Activated CD4-positive, alpha-beta T cell treated with anti-CD3 and anti-CD28 coated beads, Interleukin-2, amount 10 ng/mL, durations not matched to agents 7 days and 5 days (primary cell): ENCODE measurements at regions of chr1 and their contacts with region 1.

Region 1: DNA sequence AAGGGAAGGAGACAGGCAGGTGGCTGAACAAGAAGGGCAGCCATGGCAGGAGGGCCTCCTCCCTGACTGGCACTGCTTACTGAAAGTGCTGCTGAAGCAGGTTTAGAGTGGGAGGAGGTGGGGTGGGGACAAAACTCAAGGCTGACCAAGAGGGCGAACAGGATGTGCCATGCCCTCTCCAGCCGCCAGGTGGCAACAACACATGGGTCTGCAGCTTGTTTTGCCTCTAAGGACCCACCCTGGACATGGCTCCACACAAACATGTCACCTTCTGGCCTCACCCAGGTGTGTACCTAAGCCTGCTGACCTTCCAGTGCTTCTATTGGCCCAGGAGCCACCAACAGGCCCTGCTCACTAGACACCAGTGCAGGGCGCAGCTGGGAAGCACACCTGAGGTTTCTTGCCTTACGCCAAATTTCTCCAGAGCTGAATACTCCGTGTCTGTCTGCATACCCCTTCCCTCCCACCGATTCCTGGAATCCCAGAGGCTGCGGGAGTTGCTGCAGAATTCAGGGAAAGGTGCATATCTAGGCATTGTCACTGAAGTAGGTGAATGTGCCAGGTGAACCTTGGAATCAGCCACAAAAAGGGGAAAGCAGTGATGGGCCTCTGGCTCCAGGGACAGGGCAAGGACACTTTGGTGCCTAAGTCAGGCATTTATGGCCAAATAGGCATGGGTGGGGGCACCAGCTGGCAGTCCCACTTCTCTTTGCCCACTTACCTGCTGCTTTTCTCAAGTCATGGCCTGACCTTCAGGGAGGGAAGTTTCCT is 5.3 kb downstream of the PSRC1 start:
- DNase-seq: peak; percentile 66
- H3K4me3 Mint-ChIP-seq: no peak overlapping the region
- H3K27ac Mint-ChIP-seq: no peak overlapping the region
- H3K4me1 Mint-ChIP-seq: peaks cover 38% of the 10 kb centered on the region
- H3K27me3 Mint-ChIP-seq: no peaks in the 10 kb centered on the region

Region 2: DNA sequence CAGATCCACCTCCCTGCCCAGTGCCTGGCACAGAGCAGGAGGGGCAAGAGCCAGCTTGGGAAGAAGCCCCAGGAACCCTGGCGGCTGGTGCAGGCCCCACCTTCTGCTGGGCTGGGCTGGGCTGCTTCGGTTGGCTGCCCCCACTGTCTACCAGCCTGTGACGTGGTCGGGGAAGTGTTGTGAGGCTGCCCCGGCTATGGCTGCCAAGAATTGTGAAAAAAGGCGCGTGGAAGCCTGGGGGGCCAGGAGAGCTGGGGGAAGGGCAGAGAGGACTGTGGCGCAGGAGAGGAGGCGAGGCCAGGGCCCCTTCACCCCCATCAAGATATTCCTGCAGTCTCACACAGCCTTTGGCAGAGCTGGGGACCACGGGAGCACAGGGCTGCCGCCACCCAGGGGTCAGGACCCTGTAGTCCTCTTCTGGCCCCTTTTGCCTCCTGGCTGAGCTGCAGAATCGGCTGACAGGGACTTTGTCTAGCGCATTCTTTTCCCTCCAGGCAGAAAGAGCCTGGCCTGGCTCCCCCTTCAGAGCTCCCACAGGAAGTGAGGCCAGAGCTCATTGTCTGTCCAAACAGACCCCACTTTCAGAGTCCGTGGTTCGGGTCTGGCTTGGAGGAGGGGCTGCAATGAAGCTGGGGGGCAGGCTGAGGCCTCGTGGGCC is 24.0 kb before region 1 on chr1:
- CTCF ChIA-PET with region 1: interaction called, 10 read pairs
- POLR2A ChIA-PET with region 1: no interaction called
- DNase-seq: no peak
- H3K4me3 Mint-ChIP-seq: no peak overlapping the region
- H3K27ac Mint-ChIP-seq: no peak overlapping the region
- H3K4me1 Mint-ChIP-seq: peaks cover 6% of the 10 kb centered on the region
- H3K27me3 Mint-ChIP-seq: peaks cover 2% of the 10 kb centered on the region

Region 3: DNA sequence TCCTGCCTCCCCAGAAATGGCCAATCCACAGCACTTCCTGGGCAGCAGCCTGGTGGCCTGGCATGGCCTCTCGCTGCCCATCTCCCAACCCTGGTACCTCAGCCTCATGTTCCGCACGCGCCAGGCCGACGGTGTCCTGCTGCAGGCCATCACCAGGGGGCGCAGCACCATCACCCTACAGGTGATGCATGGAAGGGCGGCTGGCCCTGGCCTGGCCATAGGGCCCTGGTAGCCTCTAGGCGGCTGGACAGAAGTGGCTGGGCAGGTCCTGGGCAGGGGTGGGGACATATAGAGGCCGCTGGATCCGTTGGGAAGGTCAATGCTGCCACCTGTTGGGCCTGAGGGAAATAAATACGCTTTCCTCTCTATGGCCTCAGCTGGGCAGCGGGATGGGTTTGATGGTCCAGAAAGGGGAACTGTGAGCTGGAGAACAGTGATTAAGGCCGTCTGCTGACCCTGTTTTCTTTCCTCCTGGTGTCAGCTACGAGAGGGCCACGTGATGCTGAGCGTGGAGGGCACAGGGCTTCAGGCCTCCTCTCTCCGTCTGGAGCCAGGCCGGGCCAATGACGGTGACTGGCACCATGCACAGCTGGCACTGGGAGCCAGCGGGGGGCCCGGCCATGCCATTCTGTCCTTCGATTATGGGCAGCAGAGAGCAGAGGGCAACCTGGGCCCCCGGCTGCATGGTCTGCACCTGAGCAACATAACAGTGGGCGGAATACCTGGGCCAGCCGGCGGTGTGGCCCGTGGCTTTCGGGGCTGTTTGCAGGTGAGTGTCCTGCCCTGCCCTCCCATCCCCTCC is 13.8 kb before region 1 on chr1:
- CTCF ChIA-PET with region 1: interaction called, 10 read pairs
- POLR2A ChIA-PET with region 1: no interaction called
- DNase-seq: peak; percentile 82
- H3K4me3 Mint-ChIP-seq: no peak overlapping the region
- H3K27ac Mint-ChIP-seq: no peak overlapping the region
- H3K4me1 Mint-ChIP-seq: peaks cover 3% of the 10 kb centered on the region
- H3K27me3 Mint-ChIP-seq: no peaks in the 10 kb centered on the region

Region 4: DNA sequence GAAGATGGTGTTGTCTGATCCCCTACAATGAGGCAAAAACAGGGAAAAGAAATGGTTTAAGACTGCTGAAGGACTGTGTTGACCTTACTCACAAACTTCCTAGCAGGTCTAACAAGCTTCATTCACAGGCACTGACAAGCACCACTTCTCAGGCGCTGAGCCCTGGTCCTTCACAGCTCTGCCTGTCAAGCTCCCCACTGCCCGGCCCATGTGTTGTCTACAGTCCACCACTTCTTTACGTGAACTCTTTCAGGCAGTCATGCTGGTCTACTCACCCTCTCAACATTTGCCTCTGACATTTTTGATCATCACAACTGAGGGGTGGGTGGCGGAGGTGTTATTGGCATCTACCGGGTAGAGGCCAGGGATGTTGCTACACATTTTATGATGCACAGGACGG is 69.9 kb after region 1 on chr1:
- CTCF ChIA-PET with region 1: no interaction called
- POLR2A ChIA-PET with region 1: no interaction called
- DNase-seq: no peak
- H3K4me3 Mint-ChIP-seq: no peak overlapping the region
- H3K27ac Mint-ChIP-seq: no peak overlapping the region
- H3K4me1 Mint-ChIP-seq: peaks cover 7% of the 10 kb centered on the region
- H3K27me3 Mint-ChIP-seq: no peaks in the 10 kb centered on the region

Region 5: DNA sequence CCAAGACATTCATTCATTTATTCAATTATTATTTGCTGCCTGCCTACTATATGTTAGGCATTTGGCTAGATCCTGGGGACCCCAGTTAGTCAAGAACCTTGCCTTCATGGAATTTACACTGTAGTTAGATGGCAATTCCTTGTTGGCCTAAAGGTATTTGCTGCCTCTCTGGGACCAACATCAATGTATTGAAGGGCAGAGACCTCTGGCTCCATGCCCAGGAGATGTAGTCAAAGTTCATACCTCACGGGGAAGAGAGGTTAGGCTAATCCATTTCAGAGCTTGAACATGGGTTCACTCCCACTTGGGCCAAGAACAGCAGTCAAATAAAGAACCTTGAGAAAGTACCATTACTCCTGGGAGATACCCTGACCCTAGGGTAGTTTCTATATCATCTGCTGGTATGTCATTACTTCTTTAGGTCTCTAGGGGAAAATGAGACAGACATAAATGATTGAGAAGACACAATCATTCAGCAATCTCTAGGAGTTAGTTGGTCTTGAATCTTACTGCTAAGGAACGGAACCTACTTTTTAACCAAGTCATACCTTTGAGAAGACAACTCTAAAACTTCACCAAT is 88.1 kb after region 1 on chr1:
- CTCF ChIA-PET with region 1: no interaction called
- POLR2A ChIA-PET with region 1: no interaction called
- DNase-seq: no peak
- H3K4me3 Mint-ChIP-seq: no peak overlapping the region
- H3K27ac Mint-ChIP-seq: no peak overlapping the region
- H3K4me1 Mint-ChIP-seq: peaks cover 14% of the 10 kb centered on the region
- H3K27me3 Mint-ChIP-seq: peaks cover 34% of the 10 kb centered on the region